Naive thymus-derived CD4-positive, alpha-beta T cell (primary cell): ENCODE measurements at regions of chr17 and their contacts with region 1.

Region 1: DNA sequence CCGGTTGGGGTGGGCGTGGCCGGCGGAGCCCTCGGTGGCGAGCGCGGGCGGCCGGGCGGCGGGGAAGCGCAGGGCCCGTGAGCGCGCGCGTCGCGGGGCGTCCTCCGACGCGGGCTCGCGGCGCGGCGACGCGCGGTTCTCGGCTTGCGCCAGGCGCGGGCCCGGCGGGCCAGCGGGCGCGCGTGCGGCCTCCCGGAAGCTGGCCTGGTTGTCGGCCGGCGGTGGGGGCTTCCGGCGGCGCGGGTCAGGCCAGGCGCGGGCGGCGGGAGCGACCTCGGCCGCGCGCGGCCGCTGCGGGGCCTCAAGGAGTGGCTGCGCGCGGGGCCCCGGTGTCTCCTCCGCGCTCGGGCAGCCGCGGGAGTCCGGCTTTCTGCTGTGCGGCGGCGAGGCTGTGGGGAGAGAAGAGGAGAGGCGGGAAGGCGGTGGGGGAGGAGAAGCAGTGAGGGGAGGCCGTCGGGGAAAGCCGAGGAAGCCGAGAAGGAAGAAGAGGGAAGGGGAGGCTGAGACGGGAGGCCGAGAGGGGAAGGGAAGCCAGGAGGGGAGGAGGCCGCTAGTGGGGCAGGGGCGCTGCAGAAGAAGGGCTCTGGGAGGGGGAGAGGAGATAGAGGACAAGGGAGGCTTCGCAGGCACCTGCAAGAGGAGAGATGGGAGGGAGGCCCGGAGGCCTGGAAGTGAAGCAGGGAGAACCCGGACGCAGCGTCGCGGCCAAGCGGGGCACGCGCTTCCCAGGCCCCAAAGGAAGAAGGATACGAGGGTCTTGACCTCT is 2.5 kb downstream of the C17orf58 start:
- DNase-seq: peak in 3 of 9 donors; percentile 13 to 29 (median 22)
- ATAC-seq: peak; percentile 89
- H3K4me3 ChIP-seq: peak overlapping the region; percentile 50
- H3K4me3 Mint-ChIP-seq: peak overlapping the region; percentile 74 to 95 (median 86)
- H3K27ac ChIP-seq: peak overlapping the region; percentile 51
- H3K27ac Mint-ChIP-seq: peak overlapping the region in 8 of 9 donors; percentile 38 to 86 (median 54)
- H3K4me1 ChIP-seq: peaks cover 19 to 24% of the 10 kb centered on the region in 2 donors
- H3K4me1 Mint-ChIP-seq: peaks cover 21 to 38% (median 32%) of the 10 kb centered on the region in 7 donors
- H3K27me3 ChIP-seq: peaks cover 0 to 7% of the 10 kb centered on the region in 2 donors
- H3K27me3 Mint-ChIP-seq: peaks cover 5 to 38% (median 21%) of the 10 kb centered on the region in 5 donors

Region 2: GRCh38 chr17:68019675-68020408 is 26.1 kb after region 1 on chr17:
- CTCF ChIA-PET with region 1: no interaction called
- POLR2A ChIA-PET with region 1: no interaction called
- intact Hi-C with region 1: loop called (anchors 1 kb)
- DNase-seq: peak; percentile 88 to 100 (median 94)
- ATAC-seq: peak; percentile 96
- H3K4me3 ChIP-seq: peak overlapping the region; percentile 79
- H3K4me3 Mint-ChIP-seq: peak overlapping the region; percentile 85 to 95 (median 89)
- H3K27ac ChIP-seq: peak overlapping the region; percentile 79
- H3K27ac Mint-ChIP-seq: peak overlapping the region; percentile 89 to 100 (median 98)
- H3K4me1 ChIP-seq: peaks cover 6 to 10% of the 10 kb centered on the region in 2 donors
- H3K4me1 Mint-ChIP-seq: peaks cover 10 to 25% (median 17%) of the 10 kb centered on the region in 7 donors
- H3K27me3 ChIP-seq: no peaks in the 10 kb centered on the region
- H3K27me3 Mint-ChIP-seq: peaks cover 0 to 9% (median 0%) of the 10 kb centered on the region in 5 donors

Region 3: DNA sequence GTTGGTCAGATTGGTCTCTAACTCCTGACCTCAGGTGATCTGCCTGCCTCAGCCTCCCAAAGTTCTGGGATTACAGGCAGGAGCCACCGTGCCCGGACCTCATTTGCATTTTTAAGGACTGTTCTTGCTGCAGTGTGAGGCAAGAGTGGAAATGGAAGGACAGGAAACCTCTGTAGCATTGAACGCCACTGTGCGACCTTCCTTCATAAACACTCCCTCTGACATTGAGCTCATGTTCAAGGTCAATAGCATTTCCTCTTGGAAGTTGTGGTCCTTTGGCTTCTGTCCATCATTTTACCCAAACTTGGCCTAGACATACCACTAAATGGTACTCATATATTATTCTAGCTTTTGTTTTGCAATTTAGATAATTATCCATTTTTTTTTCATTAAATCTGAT is 994.2 kb after region 1 on chr17:
- CTCF ChIA-PET with region 1: no interaction called
- POLR2A ChIA-PET with region 1: no interaction called
- intact Hi-C with region 1: no loop called
- DNase-seq: no peak
- ATAC-seq: no peak
- H3K4me3 ChIP-seq: no peak overlapping the region
- H3K4me3 Mint-ChIP-seq: no peak overlapping the region
- H3K27ac ChIP-seq: no peak overlapping the region
- H3K27ac Mint-ChIP-seq: no peak overlapping the region
- H3K4me1 ChIP-seq: no peaks in the 10 kb centered on the region
- H3K4me1 Mint-ChIP-seq: no peaks in the 10 kb centered on the region
- H3K27me3 ChIP-seq: no peaks in the 10 kb centered on the region
- H3K27me3 Mint-ChIP-seq: peaks cover 0 to 8% (median 0%) of the 10 kb centered on the region in 5 donors